AG04450 (cell line): ENCODE measurements at regions of chr3 and their contacts with region 1.

Region 1: DNA sequence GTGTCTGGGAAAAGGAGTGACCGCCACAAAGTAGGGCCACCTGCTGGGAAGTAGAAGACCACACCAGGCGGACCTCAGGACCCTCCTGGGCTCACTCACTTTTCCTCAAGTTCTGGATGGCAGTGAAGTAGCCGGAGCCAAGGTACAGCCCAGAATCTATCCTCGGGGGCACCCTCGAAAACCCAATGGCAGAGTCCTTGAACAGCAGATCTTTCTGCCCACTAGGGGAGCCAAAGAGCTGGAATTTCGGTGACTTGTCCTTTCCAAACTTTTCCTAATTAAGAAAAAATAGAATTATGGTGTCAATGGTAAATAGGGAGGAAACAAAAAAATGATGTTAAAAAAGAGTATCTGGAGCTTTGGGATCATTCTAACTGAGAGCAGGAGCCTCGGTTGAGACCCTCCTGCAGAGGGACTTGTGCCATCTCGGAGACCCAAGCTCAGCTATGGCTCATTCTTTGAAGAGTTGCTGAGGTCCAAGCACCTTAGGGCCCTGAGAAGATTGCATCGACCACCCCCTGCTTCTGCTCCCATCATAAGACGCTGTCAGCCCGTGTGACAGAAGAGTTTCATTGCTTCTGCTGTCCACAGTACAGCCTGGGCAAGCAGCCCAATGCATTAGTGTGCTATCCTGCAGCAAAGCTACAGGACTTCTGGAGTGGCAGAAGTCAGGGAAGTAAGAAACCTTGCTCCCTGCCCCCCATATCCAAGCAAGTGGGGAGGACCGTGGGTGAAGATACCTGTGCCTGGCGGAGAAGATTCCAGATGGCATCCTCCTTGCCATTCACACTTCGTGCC is 14.8 kb downstream of the LTF start:
- DNase-seq: no peak
- H3K4me3 ChIP-seq: no peak overlapping the region
- H3K27ac ChIP-seq: no peak overlapping the region
- H3K27me3 ChIP-seq: peaks cover 22% of the 10 kb centered on the region
- CTCF ChIP-seq: peak; percentile 66

Region 2: GRCh38 chr3:46423588-46423987 is 26.4 kb before region 1 on chr3:
- CTCF ChIA-PET with region 1: no interaction called
- POLR2A ChIA-PET with region 1: no interaction called
- DNase-seq: no peak
- H3K4me3 ChIP-seq: no peak overlapping the region
- H3K27ac ChIP-seq: no peak overlapping the region
- H3K27me3 ChIP-seq: peaks cover 7% of the 10 kb centered on the region
- CTCF ChIP-seq: no peak

Region 3: GRCh38 chr3:46462111-46462510 is 12.2 kb after region 1 on chr3:
- CTCF ChIA-PET with region 1: interaction called, 10 read pairs
- POLR2A ChIA-PET with region 1: no interaction called
- DNase-seq: no peak
- H3K4me3 ChIP-seq: no peak overlapping the region
- H3K27ac ChIP-seq: no peak overlapping the region
- H3K27me3 ChIP-seq: peaks cover 39% of the 10 kb centered on the region
- CTCF ChIP-seq: peak; percentile 31

Region 4: GRCh38 chr3:46923559-46924350 is 473.8 kb after region 1 on chr3:
- CTCF ChIA-PET with region 1: no interaction called
- POLR2A ChIA-PET with region 1: no interaction called
- DNase-seq: no peak
- H3K4me3 ChIP-seq: no peak overlapping the region
- H3K27ac ChIP-seq: no peak overlapping the region
- H3K27me3 ChIP-seq: no peaks in the 10 kb centered on the region
- CTCF ChIP-seq: peak; percentile 71